ENCODE measurements at regions of chr1 and their contacts with region 1.

Region 1: GRCh38 chr1:84433258-84434080 is 35.2 kb downstream of the DNASE2B start:
- DNase-seq: peak; percentile 65 to 73
- H3K4me3 ChIP-seq: 0 out of 2 replicates have a peak overlapping the region, but pooled peaks have one; percentile 7
- H3K4me1 ChIP-seq: peaks cover 10% of the 10 kb centered on the region
- H3K27me3 ChIP-seq: no peaks in the 10 kb centered on the region

Region 2: DNA sequence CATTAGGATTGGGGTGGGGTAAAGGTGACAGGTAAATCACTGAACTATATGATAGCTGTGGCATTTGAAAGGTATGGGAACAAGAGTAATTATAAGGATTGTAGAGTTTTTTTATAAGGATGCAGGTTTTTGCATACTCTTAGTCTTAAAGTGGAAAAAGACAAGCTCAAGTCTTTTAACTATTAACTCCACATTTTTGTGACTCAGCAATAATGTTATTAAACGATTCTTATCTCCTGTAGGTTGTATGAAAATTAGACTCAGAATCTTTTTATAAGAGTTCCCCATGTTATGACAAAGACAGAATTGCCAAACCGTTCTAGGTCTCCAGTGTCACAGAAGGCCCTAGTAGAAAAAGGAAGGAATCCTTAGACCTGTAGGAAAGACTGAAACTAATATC is 384.6 kb before region 1 on chr1:
- in situ Hi-C with region 1: no loop called
- DNase-seq: no peak
- H3K4me3 ChIP-seq: no peak overlapping the region
- H3K4me1 ChIP-seq: no peaks in the 10 kb centered on the region
- H3K27me3 ChIP-seq: no peaks in the 10 kb centered on the region

Region 3: GRCh38 chr1:84156210-84156621 is 277.3 kb before region 1 on chr1:
- in situ Hi-C with region 1: loop called (anchors 25 kb)
- DNase-seq: no peak
- H3K4me3 ChIP-seq: no peak overlapping the region
- H3K4me1 ChIP-seq: no peaks in the 10 kb centered on the region
- H3K27me3 ChIP-seq: no peaks in the 10 kb centered on the region

Region 4: DNA sequence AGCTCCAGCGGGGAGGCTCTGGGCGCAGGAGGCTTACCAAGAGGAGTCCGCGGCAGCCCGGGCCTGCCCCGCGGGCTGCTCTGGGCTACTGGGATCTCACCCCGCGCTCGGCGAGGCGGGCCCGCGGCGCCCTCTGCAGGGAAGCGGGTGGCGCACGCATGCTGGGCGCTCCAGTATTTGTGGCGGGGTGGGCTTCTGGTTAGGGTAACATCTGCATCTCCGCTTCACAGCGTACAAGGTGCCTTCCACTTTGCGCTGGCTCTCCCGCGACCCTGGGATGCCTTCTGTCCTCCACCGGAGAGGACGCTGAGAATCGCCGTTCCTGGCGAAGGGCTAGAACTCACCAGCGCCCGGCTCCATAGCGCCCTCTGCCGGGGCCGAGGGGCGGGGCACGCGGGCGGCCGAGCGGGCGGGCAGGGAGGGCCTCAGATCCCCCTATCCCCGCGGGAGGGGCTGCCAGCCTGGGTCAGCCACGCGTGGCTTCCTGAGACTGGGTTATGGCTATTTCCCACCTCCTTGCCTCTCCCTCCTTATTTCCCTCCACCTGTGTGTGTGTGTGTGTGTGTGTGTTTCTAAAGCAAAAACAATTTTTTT is 187.3 kb after region 1 on chr1:
- in situ Hi-C with region 1: loop called (anchors 25 kb)
- DNase-seq: peak; percentile 57 to 87
- H3K4me3 ChIP-seq: peak overlapping the region; percentile 46
- H3K4me1 ChIP-seq: peaks cover 8% of the 10 kb centered on the region
- H3K27me3 ChIP-seq: no peaks in the 10 kb centered on the region

Region 5: GRCh38 chr1:84753516-84754385 is 320.3 kb after region 1 on chr1:
- in situ Hi-C with region 1: loop called (anchors 25 kb)
- DNase-seq: peak; percentile 64 to 88
- H3K4me3 ChIP-seq: no peak overlapping the region
- H3K4me1 ChIP-seq: 0 out of 2 replicates have a peak, but pooled peaks cover 5% of the 10 kb centered on the region
- H3K27me3 ChIP-seq: no peaks in the 10 kb centered on the region